ENCODE measurements at regions of chr21 and their contacts with region 1.

Region 1: GRCh38 chr21:46144464-46145070 is 10.8 kb downstream of the FTCD start:
- DNase-seq: peak; percentile 62
- H3K4me3 ChIP-seq: no peak overlapping the region
- H3K27ac ChIP-seq: no peak overlapping the region
- H3K4me1 ChIP-seq: peaks cover 0 to 10% (median 6%) of the 10 kb centered on the region in 4 donors
- H3K27me3 ChIP-seq: no peaks in the 10 kb centered on the region
- CTCF ChIP-seq: no peak
- EP300 ChIP-seq: no peak
- POLR2A ChIP-seq: no peak

Region 2: GRCh38 chr21:46184625-46185555 is 40.3 kb after region 1 on chr21:
- intact Hi-C with region 1: loop called (anchors 5 kb)
- DNase-seq: peak; percentile 94
- H3K4me3 ChIP-seq: peak overlapping the region; percentile 18 to 73 (median 46)
- H3K27ac ChIP-seq: peak overlapping the region; percentile 75 to 95 (median 80)
- H3K4me1 ChIP-seq: peaks cover 0 to 30% (median 24%) of the 10 kb centered on the region in 4 donors
- H3K27me3 ChIP-seq: peaks cover 0 to 9% (median 0%) of the 10 kb centered on the region in 3 donors
- CTCF ChIP-seq: no peak
- EP300 ChIP-seq: no peak
- POLR2A ChIP-seq: no peak

Region 3: GRCh38 chr21:46228345-46229051 is 83.9 kb after region 1 on chr21 and contains the start of gene LSS:
- intact Hi-C with region 1: loop called (anchors 5 kb)
- DNase-seq: peak; percentile 99
- H3K4me3 ChIP-seq: peak within 1 kb of the TSS; percentile 74 to 100 (median 89)
- H3K27ac ChIP-seq: peak within 1 kb of the TSS; percentile 82 to 90 (median 90)
- H3K4me1 ChIP-seq: peaks cover 0 to 41% (median 33%) of the 10 kb centered on the region in 4 donors
- H3K27me3 ChIP-seq: no peaks in the 10 kb centered on the region
- CTCF ChIP-seq: no peak
- EP300 ChIP-seq: peak in 1 of 4 donors; percentile 53
- POLR2A ChIP-seq: peak in 1 of 2 donors; percentile 57
- total RNA-seq, gene LSS: 47.6 to 63.7 (median 57.0) TPM

Measured in sigmoid colon (tissue), 7 donors.